Caco-2 (cell line): ENCODE measurements at regions of chr17 and their contacts with region 1.

Region 1: GRCh38 chr17:39547713-39548478 is 59.8 kb downstream of the NEUROD2 start:
- DNase-seq: peak; percentile 57 to 77
- H3K4me3 ChIP-seq: no peak overlapping the region
- H3K4me3 Mint-ChIP-seq: no peak overlapping the region
- H3K27ac Mint-ChIP-seq: no peak overlapping the region
- H3K4me1 ChIP-seq: no peaks in the 10 kb centered on the region
- H3K4me1 Mint-ChIP-seq: no peaks in the 10 kb centered on the region
- H3K27me3 ChIP-seq: no peaks in the 10 kb centered on the region
- H3K27me3 Mint-ChIP-seq: no peaks in the 10 kb centered on the region
- CTCF ChIP-seq: peak; percentile 90 to 98

Region 2: GRCh38 chr17:39393736-39394135 is 154.2 kb before region 1 on chr17:
- CTCF ChIA-PET with region 1: no interaction called
- POLR2A ChIA-PET with region 1: no interaction called
- intact Hi-C with region 1: no loop called
- DNase-seq: no peak
- H3K4me3 ChIP-seq: no peak overlapping the region
- H3K4me3 Mint-ChIP-seq: no peak overlapping the region
- H3K27ac Mint-ChIP-seq: no peak overlapping the region
- H3K4me1 ChIP-seq: no peaks in the 10 kb centered on the region
- H3K4me1 Mint-ChIP-seq: no peaks in the 10 kb centered on the region
- H3K27me3 ChIP-seq: no peaks in the 10 kb centered on the region
- H3K27me3 Mint-ChIP-seq: no peaks in the 10 kb centered on the region
- CTCF ChIP-seq: no peak

Region 3: GRCh38 chr17:39527220-39527813 is 20.6 kb before region 1 on chr17:
- CTCF ChIA-PET with region 1: interaction called, 11 read pairs
- POLR2A ChIA-PET with region 1: no interaction called
- intact Hi-C with region 1: no loop called
- DNase-seq: peak in 1 of 2 experiments; percentile 38
- H3K4me3 ChIP-seq: no peak overlapping the region
- H3K4me3 Mint-ChIP-seq: no peak overlapping the region
- H3K27ac Mint-ChIP-seq: no peak overlapping the region
- H3K4me1 ChIP-seq: no peaks in the 10 kb centered on the region
- H3K4me1 Mint-ChIP-seq: no peaks in the 10 kb centered on the region
- H3K27me3 ChIP-seq: no peaks in the 10 kb centered on the region
- H3K27me3 Mint-ChIP-seq: no peaks in the 10 kb centered on the region
- CTCF ChIP-seq: peak; percentile 53 to 71

Region 4: GRCh38 chr17:39536468-39536867 is 11.4 kb before region 1 on chr17:
- CTCF ChIA-PET with region 1: interaction called, 13 read pairs
- POLR2A ChIA-PET with region 1: no interaction called
- intact Hi-C with region 1: no loop called
- DNase-seq: peak in 1 of 2 experiments; percentile 16
- H3K4me3 ChIP-seq: no peak overlapping the region
- H3K4me3 Mint-ChIP-seq: no peak overlapping the region
- H3K27ac Mint-ChIP-seq: no peak overlapping the region
- H3K4me1 ChIP-seq: peaks cover 32% of the 10 kb centered on the region
- H3K4me1 Mint-ChIP-seq: peaks cover 15% of the 10 kb centered on the region
- H3K27me3 ChIP-seq: no peaks in the 10 kb centered on the region
- H3K27me3 Mint-ChIP-seq: no peaks in the 10 kb centered on the region
- CTCF ChIP-seq: no peak

Region 5: GRCh38 chr17:39722965-39723848 is 175.3 kb after region 1 on chr17:
- CTCF ChIA-PET with region 1: no interaction called
- POLR2A ChIA-PET with region 1: no interaction called
- intact Hi-C with region 1: no loop called
- DNase-seq: peak in 1 of 2 experiments; percentile 47
- H3K4me3 ChIP-seq: no peak overlapping the region
- H3K4me3 Mint-ChIP-seq: no peak overlapping the region
- H3K27ac Mint-ChIP-seq: no peak overlapping the region
- H3K4me1 ChIP-seq: no peaks in the 10 kb centered on the region
- H3K4me1 Mint-ChIP-seq: no peaks in the 10 kb centered on the region
- H3K27me3 ChIP-seq: no peaks in the 10 kb centered on the region
- H3K27me3 Mint-ChIP-seq: no peaks in the 10 kb centered on the region
- CTCF ChIP-seq: no peak